Dorsolateral prefrontal cortex (tissue), 120 donors: ENCODE measurements at regions of chr1 and their contacts with region 1.

Region 1: GRCh38 chr1:90964444-90965035 is 57.3 kb downstream of the ZNF644 start:
- DNase-seq: no peak
- H3K4me3 ChIP-seq: no peak overlapping the region
- H3K27ac ChIP-seq: peak overlapping the region in 10 of 59 donors; percentile 2 to 59 (median 17)
- H3K27me3 ChIP-seq: no peaks in the 10 kb centered on the region
- CTCF ChIP-seq: peak in 55 of 56 donors; percentile 34 to 85 (median 63)

Region 2: DNA sequence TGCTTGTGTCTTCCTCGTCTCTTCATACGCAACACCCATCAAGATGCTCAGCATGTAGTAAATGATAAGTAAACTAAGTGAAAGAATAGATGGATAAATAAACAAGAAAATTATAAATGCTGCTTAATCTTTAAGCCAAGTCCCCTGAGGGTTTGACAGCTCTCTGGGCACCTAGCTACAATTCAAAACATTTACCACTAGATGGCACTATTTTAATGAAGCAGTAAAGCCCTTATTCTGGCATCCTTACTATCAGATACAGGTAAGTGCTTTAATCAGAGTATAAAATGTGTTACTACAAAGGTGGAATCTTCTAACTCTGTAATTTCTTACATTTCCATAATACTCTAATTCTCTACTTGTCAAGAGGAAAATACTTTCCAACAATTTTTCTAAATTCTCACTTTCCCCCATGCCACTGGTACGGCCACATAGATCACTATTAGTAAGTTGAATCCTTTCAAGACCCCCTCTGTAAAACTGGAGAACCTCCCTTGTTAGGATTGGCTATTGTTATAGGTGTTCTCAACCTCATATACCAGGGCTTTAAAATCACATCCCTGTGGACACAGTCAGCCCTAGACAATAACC is 385.2 kb before region 1 on chr1:
- intact Hi-C with region 1: loop called in 1 of 2 experiments (anchors 10 kb)
- DNase-seq: no peak
- H3K4me3 ChIP-seq: no peak overlapping the region
- H3K27ac ChIP-seq: no peak overlapping the region
- H3K27me3 ChIP-seq: peaks cover 0 to 37% (median 3%) of the 10 kb centered on the region in 45 donors
- CTCF ChIP-seq: peak; percentile 51 to 82 (median 70)

Region 3: GRCh38 chr1:90850898-90851710 is 113.4 kb before region 1 on chr1:
- intact Hi-C with region 1: loop called in 1 of 2 experiments (anchors 5 kb)
- DNase-seq: peak in 8 of 10 donors; percentile 56 to 82 (median 72)
- H3K4me3 ChIP-seq: peak overlapping the region; percentile 48 to 92 (median 79)
- H3K27ac ChIP-seq: peak overlapping the region in 26 of 59 donors; percentile 0 to 86 (median 42)
- H3K27me3 ChIP-seq: peaks cover 0 to 6% (median 0%) of the 10 kb centered on the region in 45 donors
- CTCF ChIP-seq: peak; percentile 35 to 87 (median 76)